K562 (cell line): ENCODE measurements at regions of chr12 and their contacts with region 1.

Region 1: GRCh38 chr12:49930515-49931288 is 19.8 kb upstream of the AQP2 start:
- DNase-seq: no peak
- ATAC-seq: no peak
- H3K4me3 ChIP-seq: no peak overlapping the region
- H3K27ac ChIP-seq: no peak overlapping the region
- H3K4me1 ChIP-seq: no peaks in the 10 kb centered on the region; a peak in 1 of 5 replicates
- H3K27me3 ChIP-seq: peaks cover 6 to 12% of the 10 kb centered on the region in 2 experiments; a peak in 2 of 5 replicates
- CTCF ChIP-seq: no peak
- EP300 ChIP-seq: no peak
- POLR2A ChIP-seq: no peak
- RAD21 ChIP-seq: no peak

Region 2: GRCh38 chr12:49945394-49946080 is 14.8 kb after region 1 on chr12:
- CTCF ChIA-PET with region 1: no interaction called
- POLR2A ChIA-PET with region 1: interaction called, 12 read pairs
- in situ Hi-C with region 1: no loop called
- intact Hi-C with region 1: no loop called
- DNase-seq: peak; percentile 90 to 92 (median 91)
- ATAC-seq: peak; percentile 99
- H3K4me3 ChIP-seq: no peak overlapping the region
- H3K27ac ChIP-seq: peak overlapping the region; percentile 35; the same call in 1 of the 3 replicates
- H3K4me1 ChIP-seq: peaks cover 14 to 20% of the 10 kb centered on the region in 2 experiments; a peak in 4 of 5 replicates
- H3K27me3 ChIP-seq: no peaks in the 10 kb centered on the region
- CTCF ChIP-seq: peak; percentile 87 to 95 (median 90)
- EP300 ChIP-seq: peak; percentile 54; the same call in 1 of the 2 replicates
- POLR2A ChIP-seq: 0 out of 2 replicates have a peak, but pooled peaks have one; percentile 19
- RAD21 ChIP-seq: peak; percentile 42 to 61